ENCODE measurements at regions of chr1 and their contacts with region 1.

Region 1: DNA sequence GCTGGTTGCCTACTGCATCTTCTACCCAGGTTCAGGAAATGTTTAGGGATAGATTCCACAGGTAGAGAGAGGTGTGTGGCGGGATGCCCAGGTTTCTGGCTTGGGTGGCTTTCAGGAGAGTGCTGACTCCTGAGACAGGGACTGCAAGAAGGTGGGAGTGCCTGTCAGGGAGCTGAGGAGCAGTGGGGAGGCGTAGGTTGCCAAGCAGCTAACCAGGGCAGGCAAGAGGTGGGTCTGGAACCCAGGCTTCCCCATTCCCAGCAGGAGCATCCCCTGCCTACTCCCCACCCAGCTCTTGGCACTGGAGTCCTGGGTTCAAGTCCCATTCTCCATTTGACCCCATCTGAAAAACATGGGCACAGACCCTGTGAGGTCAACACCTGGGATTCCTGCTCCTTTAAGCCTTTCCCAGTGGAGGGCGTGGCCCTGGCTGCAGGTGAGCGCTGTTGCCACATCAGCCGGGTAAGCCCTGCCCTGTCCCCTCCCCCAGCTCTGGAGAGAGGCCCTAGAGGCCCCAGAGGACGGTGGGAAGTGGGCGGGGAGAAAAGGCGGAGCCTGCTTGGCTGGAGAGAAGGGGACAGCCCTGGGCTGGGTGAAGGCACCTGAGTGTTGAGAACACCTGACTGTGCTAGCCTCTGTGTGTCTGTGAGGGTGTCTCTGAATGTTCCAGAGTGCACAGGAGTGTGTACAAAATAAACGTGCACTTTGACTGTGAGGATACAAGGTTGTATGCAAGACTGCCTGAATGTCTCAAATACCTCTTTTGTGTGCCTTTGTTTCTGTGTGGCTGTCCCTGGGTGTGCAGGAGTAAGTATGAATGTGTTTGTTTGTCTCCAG is 14.0 kb upstream of the SYNC start:
- DNase-seq: peak in 1 of 2 donors; percentile 65
- ATAC-seq: peak in 1 of 2 donors; percentile 57
- H3K4me3 ChIP-seq: no peak overlapping the region
- H3K27ac ChIP-seq: no peak overlapping the region
- H3K4me1 ChIP-seq: no peaks in the 10 kb centered on the region
- H3K27me3 ChIP-seq: no peaks in the 10 kb centered on the region
- CTCF ChIP-seq: no peak
- POLR2A ChIP-seq: no peak

Region 2: GRCh38 chr1:32741413-32742198 is 25.1 kb after region 1 on chr1:
- in situ Hi-C with region 1: no loop called
- intact Hi-C with region 1: loop called (anchors 2 kb)
- DNase-seq: no peak
- ATAC-seq: peak; percentile 67 to 69
- H3K4me3 ChIP-seq: peak overlapping the region; percentile 59 to 94 (median 64)
- H3K27ac ChIP-seq: peak overlapping the region; percentile 66 to 82 (median 77)
- H3K4me1 ChIP-seq: peaks cover 6 to 16% of the 10 kb centered on the region in 2 donors
- H3K27me3 ChIP-seq: no peaks in the 10 kb centered on the region
- CTCF ChIP-seq: peak; percentile 25 to 48 (median 37)
- POLR2A ChIP-seq: no peak

Region 3: DNA sequence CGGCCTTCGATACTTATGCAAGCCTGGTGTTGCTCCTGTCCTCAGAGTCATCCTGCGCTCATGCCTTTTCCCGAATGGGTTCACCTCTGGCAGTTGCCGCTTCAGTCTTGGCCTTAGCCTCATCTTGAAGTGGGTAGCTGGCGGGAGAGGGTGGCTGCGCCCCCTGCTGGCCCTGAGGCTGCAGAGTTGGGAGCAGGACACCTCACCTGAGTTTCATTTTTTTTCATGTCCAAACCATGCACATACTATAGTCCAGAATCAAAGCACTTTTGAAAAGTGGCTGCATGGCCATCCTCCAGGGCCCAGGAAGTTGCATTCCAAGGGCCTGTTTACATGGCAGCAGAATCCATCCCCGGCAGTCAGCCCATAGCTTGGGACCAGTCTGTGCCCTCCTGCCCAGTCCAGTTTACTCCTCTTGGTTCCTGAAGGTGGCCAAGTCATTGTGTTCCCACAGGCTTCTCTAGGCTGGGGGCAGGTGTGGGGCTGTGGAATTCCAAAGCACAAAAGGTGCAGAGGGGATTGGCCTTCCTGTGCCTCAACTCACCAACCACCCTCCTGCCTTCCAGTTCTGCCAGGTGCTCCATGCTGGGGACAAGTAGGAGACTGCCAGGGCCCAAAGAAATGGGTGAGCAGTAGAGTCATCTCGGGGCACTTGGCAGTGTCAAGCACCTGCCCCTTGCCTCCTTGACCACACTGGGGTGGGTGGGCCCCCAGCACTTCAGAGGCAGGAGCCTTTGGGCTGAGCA is 56.7 kb after region 1 on chr1:
- in situ Hi-C with region 1: loop called in 3 of 4 experiments (anchors 5 to 10 kb)
- intact Hi-C with region 1: loop called (anchors 1 kb)
- DNase-seq: peak; percentile 61 to 84
- ATAC-seq: peak; percentile 81 to 89
- H3K4me3 ChIP-seq: no peak overlapping the region
- H3K27ac ChIP-seq: peak overlapping the region in 1 of 4 donors; percentile 21
- H3K4me1 ChIP-seq: peaks cover 0 to 5% of the 10 kb centered on the region in 2 donors
- H3K27me3 ChIP-seq: no peaks in the 10 kb centered on the region
- CTCF ChIP-seq: peak; percentile 83 to 96 (median 91)
- POLR2A ChIP-seq: no peak

Region 4: GRCh38 chr1:32876341-32877210 is 160.0 kb after region 1 on chr1:
- in situ Hi-C with region 1: no loop called
- intact Hi-C with region 1: loop called (anchors 1 kb)
- DNase-seq: peak in 1 of 2 donors; percentile 45
- ATAC-seq: peak in 1 of 2 donors; percentile 63
- H3K4me3 ChIP-seq: no peak overlapping the region
- H3K27ac ChIP-seq: no peak overlapping the region
- H3K4me1 ChIP-seq: peaks cover 9 to 17% of the 10 kb centered on the region in 2 donors
- H3K27me3 ChIP-seq: no peaks in the 10 kb centered on the region
- CTCF ChIP-seq: peak; percentile 53 to 86 (median 81)
- POLR2A ChIP-seq: no peak